ENCODE measurements at regions of chr7 and their contacts with region 1.

Region 1: DNA sequence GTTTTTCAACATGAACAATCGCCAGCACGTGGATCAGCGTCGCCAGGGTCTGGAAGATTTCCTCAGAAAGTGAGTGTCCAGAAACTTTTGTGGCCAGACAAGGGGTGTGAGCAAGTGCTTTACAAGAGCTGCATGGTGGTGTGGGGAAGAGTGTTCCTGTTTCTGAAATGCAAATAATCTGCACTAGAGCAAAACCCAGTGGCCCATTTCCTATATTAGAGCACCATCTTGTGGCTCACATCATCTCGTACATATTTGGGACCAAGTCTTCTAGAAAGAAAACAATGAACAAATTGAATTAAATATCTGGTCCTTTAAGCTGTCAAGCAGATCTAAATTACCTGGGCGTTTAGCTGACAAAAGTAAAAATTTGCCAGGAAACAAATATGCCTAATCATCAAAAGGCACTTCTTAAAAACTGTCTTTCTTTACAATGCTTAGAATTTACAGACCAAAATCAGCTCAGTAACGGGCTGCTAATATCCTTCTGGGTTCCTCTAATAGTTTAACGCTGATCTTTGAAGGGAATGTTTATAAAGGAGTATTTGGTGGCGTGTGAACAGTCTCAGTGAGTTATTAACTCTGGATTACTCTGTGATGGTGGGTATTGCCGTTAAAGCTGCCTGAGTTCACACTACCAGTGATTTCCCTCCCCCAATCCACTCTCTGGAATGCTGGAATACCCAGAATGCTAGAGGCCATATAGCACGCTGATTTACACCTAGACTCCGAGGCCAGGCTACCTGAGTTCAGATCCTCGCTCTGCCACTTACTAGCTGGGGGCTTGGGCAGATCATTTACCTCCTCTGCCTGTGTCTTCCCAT is 73.6 kb downstream of the SNX10 start:
- DNase-seq: no peak
- ATAC-seq: peak; percentile 73
- H3K4me3 ChIP-seq: no peak overlapping the region
- H3K27ac ChIP-seq: no peak overlapping the region
- H3K4me1 ChIP-seq: no peaks in the 10 kb centered on the region
- H3K27me3 ChIP-seq: no peaks in the 10 kb centered on the region

Region 2: GRCh38 chr7:25870574-25870973 is 494.7 kb before region 1 on chr7:
- intact Hi-C with region 1: loop called (anchors 5 to 10 kb)
- DNase-seq: no peak
- ATAC-seq: no peak
- H3K4me3 ChIP-seq: no peak overlapping the region
- H3K27ac ChIP-seq: no peak overlapping the region
- H3K4me1 ChIP-seq: no peaks in the 10 kb centered on the region
- H3K27me3 ChIP-seq: peaks cover 5% of the 10 kb centered on the region in 2 donors

Region 3: DNA sequence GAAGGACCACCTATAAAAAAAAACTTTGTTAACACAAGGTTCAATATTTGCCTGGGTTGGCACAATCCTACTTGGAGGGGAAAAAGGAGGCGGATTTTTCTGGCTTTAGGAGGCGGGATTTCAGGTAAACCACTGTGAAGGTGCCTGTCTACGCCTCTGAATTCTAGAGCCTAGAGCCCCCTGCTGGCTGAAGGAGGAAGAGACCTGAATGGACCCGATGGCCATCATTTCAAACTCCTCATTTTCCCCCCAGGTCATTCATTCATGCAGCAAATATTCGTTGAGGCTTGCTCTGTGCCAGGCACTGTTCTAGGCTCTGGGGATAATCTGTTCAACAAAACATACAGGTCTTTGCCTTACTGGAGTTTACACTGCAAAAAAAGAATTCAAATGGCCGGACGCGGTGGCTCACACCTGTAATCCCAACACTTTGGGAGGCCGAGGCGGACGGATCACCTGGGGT is 303.6 kb before region 1 on chr7:
- intact Hi-C with region 1: loop called in 1 of 2 experiments (anchors 10 kb)
- DNase-seq: peak; percentile 53 to 83
- ATAC-seq: peak; percentile 76
- H3K4me3 ChIP-seq: no peak overlapping the region
- H3K27ac ChIP-seq: no peak overlapping the region
- H3K4me1 ChIP-seq: no peaks in the 10 kb centered on the region
- H3K27me3 ChIP-seq: peaks cover 0 to 4% of the 10 kb centered on the region in 2 donors

Region 4: DNA sequence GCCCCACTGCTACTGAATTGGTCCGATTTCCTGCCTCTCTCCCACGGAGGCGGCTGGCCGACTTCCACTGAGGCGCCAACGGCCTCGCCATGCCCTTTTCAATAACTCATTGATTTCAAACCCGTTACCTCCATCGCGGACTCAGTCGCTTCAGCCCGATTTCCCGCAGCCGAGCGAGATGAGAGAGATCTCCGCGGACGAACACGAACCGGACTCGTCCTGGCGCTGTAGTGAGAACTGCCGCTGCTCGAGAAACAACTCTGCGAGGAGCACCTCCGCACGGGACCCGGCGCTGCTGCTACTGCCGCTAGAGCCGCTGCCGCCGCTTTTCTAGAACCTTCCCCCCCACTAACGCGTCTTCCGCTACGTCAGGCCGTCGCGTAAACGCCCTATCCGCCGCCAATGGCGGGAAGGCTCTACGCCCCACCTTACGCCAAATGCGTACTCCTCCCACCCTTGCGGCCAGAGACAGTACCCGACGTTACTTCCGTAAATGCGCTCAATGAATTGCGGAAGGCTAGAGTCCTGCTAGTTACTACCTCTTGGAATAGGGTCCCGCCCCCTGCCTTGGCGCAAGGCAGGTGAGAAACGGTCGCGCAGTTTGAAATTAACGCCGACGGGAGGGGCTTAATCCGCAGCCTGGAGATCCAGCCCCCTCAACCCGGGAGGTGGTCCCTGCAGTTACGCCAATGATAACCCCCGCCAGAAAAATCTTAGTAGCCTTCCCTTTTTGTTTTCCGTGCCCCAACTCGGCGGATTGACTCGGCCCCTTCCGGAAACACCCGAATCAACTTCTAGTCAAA is 164.6 kb before region 1 on chr7 and contains the start of gene HNRNPA2B1:
- intact Hi-C with region 1: loop called in 1 of 2 experiments (anchors 10 kb)
- DNase-seq: peak; percentile 98 to 99
- ATAC-seq: peak; percentile 95
- H3K4me3 ChIP-seq: peak within 1 kb of the TSS; percentile 95 to 98
- H3K27ac ChIP-seq: peak within 1 kb of the TSS; percentile 90 to 100
- H3K4me1 ChIP-seq: peaks cover 0 to 6% of the 10 kb centered on the region in 2 donors
- H3K27me3 ChIP-seq: no peaks in the 10 kb centered on the region
- total RNA-seq, gene HNRNPA2B1: 332 to 354 TPM

Region 5: DNA sequence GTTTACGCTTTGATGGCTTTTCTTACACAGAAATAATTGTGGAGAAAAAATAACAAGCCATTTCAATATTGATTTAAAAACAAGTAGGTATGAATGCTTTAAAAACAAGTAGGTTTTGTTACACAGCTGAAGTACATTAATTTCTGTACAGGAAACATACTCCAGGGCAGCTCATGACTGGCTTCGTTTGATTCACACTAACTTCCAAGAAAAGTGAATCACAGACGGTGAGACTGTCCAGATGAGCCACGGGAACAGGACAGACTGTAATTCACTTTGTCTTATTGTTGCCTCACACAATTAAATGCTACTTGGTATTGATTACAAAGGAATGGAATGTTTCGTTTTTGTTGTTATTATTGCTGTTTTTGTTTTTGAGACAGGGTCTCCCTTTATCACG is 100.2 kb before region 1 on chr7:
- intact Hi-C with region 1: no loop called
- DNase-seq: no peak
- ATAC-seq: no peak
- H3K4me3 ChIP-seq: no peak overlapping the region
- H3K27ac ChIP-seq: no peak overlapping the region
- H3K4me1 ChIP-seq: no peaks in the 10 kb centered on the region
- H3K27me3 ChIP-seq: no peaks in the 10 kb centered on the region

Region 6: DNA sequence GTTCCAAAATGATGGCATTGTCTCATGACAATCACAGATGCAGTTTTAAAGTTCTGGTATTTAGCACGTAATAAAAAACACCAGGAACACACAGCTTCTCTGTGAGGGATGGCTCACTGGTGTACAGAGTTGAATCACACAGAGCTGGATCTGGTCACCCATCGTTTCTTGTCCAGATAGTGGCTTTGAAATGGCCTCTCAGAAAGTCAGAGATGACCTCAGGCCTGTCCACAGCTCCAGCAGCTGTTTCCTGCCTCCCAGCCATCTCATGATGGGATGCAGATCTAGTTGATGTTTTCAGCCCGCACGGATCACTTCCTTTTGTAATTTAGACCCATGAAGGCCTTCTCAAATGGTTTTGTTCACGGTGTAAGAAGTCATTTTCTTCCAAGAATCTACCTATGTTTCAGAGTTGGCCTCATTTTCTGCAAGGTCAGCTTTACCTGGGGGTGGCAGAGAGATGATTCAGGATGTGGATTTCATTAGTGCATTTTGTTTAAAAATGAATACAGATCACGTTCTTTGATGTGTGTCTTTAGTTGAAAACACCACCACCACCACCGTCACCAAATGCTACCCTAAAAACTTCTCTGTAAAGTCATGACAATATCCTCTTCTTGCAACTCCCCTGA is 92.5 kb after region 1 on chr7:
- intact Hi-C with region 1: no loop called
- DNase-seq: no peak
- ATAC-seq: no peak
- H3K4me3 ChIP-seq: no peak overlapping the region
- H3K27ac ChIP-seq: no peak overlapping the region
- H3K4me1 ChIP-seq: no peaks in the 10 kb centered on the region
- H3K27me3 ChIP-seq: no peaks in the 10 kb centered on the region

Region 7: GRCh38 chr7:27160546-27161213 is 795.4 kb after region 1 on chr7:
- intact Hi-C with region 1: loop called (anchors 2 to 5 kb)
- DNase-seq: peak; percentile 90 to 96
- ATAC-seq: peak; percentile 84
- H3K4me3 ChIP-seq: peak overlapping the region; percentile 33 to 45
- H3K27ac ChIP-seq: no peak overlapping the region
- H3K4me1 ChIP-seq: no peaks in the 10 kb centered on the region
- H3K27me3 ChIP-seq: no peaks in the 10 kb centered on the region